ENCODE measurements at regions of chr1 and their contacts with region 1.

Region 1: DNA sequence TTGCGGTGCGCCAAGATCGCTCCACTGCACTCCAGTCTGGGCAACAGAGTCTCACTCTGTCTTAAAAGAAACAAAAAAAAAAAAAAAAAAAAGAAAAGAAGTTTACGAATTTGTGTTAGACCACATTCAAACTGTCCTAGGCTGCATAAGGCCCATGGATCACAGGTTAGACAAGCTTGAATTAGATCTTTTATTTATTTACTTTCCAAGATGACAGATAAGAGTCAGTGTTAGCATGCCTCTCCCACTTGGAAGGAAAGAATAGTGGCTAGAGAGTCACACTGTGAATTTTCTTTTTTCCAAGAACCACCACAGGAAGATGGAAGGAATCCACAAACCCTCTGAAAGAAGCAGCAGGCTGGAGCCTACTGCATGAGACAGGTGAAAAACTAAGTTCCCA is 29.3 kb downstream of the NSL1 start:
- DNase-seq: no peak
- ATAC-seq: no peak
- H3K4me3 ChIP-seq: no peak overlapping the region
- H3K27ac ChIP-seq: no peak overlapping the region
- H3K4me1 ChIP-seq: no peaks in the 10 kb centered on the region
- H3K27me3 ChIP-seq: no peaks in the 10 kb centered on the region
- CTCF ChIP-seq: no peak

Region 2: GRCh38 chr1:213211201-213211600 is 449.0 kb after region 1 on chr1:
- CTCF ChIA-PET with region 1: no interaction called
- POLR2A ChIA-PET with region 1: interaction called, 15 read pairs
- in situ Hi-C with region 1: no loop called
- intact Hi-C with region 1: no loop called
- DNase-seq: no peak
- ATAC-seq: no peak
- H3K4me3 ChIP-seq: no peak overlapping the region
- H3K27ac ChIP-seq: no peak overlapping the region
- H3K4me1 ChIP-seq: no peaks in the 10 kb centered on the region
- H3K27me3 ChIP-seq: no peaks in the 10 kb centered on the region
- CTCF ChIP-seq: no peak

Region 3: DNA sequence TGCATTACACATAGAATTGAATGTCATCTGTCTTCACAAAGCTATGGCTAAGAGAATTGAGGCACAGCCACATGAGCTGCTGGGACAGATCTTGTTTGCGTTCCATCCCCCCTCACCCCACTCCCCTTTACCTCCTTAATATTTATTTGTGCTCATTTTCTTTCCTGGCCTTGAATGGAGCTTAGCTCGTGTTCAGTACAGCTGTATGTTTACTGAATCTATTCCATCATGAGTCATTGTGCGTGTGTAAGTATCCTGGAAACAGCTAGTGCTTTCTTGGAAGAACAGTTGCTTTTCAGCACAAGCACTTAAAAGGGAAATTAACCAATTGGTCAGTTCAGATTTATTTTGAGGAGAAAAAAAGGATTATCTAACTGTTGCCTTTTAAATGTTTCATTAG is 1240.2 kb after region 1 on chr1:
- CTCF ChIA-PET with region 1: no interaction called
- POLR2A ChIA-PET with region 1: no interaction called
- in situ Hi-C with region 1: no loop called
- intact Hi-C with region 1: no loop called
- DNase-seq: no peak
- ATAC-seq: no peak
- H3K4me3 ChIP-seq: no peak overlapping the region
- H3K27ac ChIP-seq: no peak overlapping the region
- H3K4me1 ChIP-seq: no peaks in the 10 kb centered on the region
- H3K27me3 ChIP-seq: peaks cover 19% of the 10 kb centered on the region
- CTCF ChIP-seq: no peak